CD4-positive, alpha-beta T cell (primary cell): ENCODE measurements at regions of chr10 and their contacts with region 1.

Region 1: DNA sequence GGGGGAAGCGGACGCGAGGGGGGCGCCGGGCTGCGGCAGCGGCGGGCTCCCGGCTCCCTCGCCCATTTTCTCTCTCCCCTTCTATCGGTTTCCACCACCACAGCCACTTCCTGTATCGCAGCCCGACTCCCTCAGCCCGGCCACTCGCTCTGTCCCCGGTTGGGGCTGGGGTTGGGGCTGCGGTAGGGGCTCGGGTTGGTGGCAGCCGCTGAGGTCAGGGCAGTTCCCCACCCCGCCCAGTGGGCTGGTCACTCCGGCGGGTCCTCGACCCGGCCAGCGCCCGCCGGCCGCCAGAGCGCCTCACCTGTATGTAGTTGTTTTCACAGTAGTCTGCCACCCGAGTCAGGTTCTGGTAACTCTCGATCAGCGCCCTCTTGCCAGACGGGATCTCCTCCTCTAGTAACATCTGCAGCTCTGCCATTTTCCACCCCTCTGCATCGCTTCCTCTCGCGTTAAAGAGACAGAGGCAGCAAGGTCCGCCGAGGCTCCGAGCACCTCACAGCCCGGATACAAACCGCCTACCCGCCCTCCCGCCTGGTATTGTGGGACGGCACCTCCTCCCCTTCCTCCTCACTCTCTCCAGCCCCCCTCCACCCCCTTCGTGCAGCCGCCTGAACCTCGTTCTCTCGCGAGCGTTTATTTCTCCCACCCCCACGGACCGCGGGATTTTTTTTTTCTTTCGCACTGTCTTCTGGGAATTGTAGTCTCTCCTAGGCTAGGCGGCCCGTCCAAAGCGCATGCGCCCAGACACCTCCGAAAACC is at the start of gene ABI1:
- DNase-seq: peak; percentile 96 to 99 (median 98)
- ATAC-seq: peak; percentile 90
- H3K4me3 ChIP-seq: peak within 1 kb of the TSS; percentile 91
- H3K4me3 Mint-ChIP-seq: peak within 1 kb of the TSS; percentile 95
- H3K27ac ChIP-seq: peak within 1 kb of the TSS; percentile 88 to 97
- H3K27ac Mint-ChIP-seq: peak within 1 kb of the TSS; percentile 87
- H3K4me1 ChIP-seq: peaks cover 22% of the 10 kb centered on the region
- H3K4me1 Mint-ChIP-seq: peaks cover 33% of the 10 kb centered on the region
- H3K27me3 ChIP-seq: no peaks in the 10 kb centered on the region
- H3K27me3 Mint-ChIP-seq: peaks cover 7% of the 10 kb centered on the region
- CTCF ChIP-seq: no peak
- total RNA-seq, gene ABI1: 83.2 to 83.6 TPM

Region 2: DNA sequence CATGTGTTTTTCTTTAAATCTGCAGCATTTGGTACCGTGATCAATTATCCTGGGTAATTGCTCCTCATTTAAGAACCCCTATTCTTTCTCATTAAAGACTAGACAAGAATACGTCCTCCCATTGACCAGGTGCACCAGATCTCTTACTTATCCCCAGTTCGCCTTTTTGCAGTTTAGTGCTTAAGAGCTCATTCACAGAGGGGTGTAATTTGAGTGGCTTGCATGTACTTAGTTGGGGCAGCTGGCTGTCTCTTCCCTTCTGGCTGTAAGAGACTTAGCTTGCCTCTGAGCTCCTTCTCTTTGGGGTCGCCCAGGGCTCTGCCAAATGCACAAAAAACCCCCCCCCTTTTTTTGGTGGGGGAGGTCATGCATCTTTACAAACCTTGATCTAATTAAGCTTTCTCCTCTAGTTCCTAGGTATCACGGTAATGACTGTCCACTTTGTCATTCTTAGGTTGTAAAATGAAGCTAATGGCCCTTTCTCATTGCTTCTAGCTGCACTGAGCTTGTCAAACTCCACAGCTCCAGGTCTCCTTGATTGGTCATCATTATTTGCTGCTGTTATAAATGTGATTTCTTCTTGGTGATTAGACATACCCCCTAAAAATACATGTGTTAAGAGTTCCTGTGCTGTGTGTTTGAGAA is 617.8 kb before region 1 on chr10:
- CTCF ChIA-PET with region 1: no interaction called
- POLR2A ChIA-PET with region 1: no interaction called
- intact Hi-C with region 1: no loop called
- DNase-seq: no peak
- ATAC-seq: no peak
- H3K4me3 ChIP-seq: no peak overlapping the region
- H3K4me3 Mint-ChIP-seq: no peak overlapping the region
- H3K27ac ChIP-seq: no peak overlapping the region
- H3K27ac Mint-ChIP-seq: no peak overlapping the region
- H3K4me1 ChIP-seq: no peaks in the 10 kb centered on the region
- H3K4me1 Mint-ChIP-seq: no peaks in the 10 kb centered on the region
- H3K27me3 ChIP-seq: peaks cover 0 to 3% of the 10 kb centered on the region in 2 experiments
- H3K27me3 Mint-ChIP-seq: peaks cover 53% of the 10 kb centered on the region
- CTCF ChIP-seq: no peak

Region 3: DNA sequence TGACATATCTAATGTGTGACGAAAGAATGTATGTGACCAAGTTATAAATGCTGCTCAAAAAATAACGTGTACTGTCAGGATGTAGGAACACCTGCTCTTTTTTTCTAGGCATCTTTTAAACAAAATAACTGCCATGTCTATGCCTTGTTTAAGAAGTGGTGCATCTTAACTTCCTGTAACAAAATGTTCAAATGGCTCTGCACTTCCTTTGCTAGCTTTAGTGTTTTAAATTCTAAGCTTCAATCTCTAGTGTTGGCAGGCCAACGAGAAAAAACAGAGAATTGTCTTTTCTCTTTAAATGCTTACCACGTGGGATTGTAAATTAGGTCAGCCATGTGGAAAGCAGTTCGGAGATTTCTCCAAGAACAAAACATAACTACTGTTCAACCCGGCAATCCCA is 177.7 kb before region 1 on chr10:
- CTCF ChIA-PET with region 1: no interaction called
- POLR2A ChIA-PET with region 1: interaction called, 3 read pairs
- intact Hi-C with region 1: loop called (anchors 2 to 5 kb)
- DNase-seq: peak in 3 of 14 experiments; percentile 62 to 68 (median 63)
- ATAC-seq: peak; percentile 91
- H3K4me3 ChIP-seq: no peak overlapping the region
- H3K4me3 Mint-ChIP-seq: peak overlapping the region; percentile 11
- H3K27ac ChIP-seq: peak overlapping the region; percentile 28 to 50
- H3K27ac Mint-ChIP-seq: peak overlapping the region; percentile 83
- H3K4me1 ChIP-seq: no peaks in the 10 kb centered on the region
- H3K4me1 Mint-ChIP-seq: peaks cover 50% of the 10 kb centered on the region
- H3K27me3 ChIP-seq: no peaks in the 10 kb centered on the region
- H3K27me3 Mint-ChIP-seq: peaks cover 4% of the 10 kb centered on the region
- CTCF ChIP-seq: no peak

Region 4: GRCh38 chr10:26743091-26743490 is 117.5 kb before region 1 on chr10:
- CTCF ChIA-PET with region 1: interaction called, 4 read pairs
- POLR2A ChIA-PET with region 1: no interaction called
- intact Hi-C with region 1: loop called in 1 of 2 experiments (anchors 5 kb)
- DNase-seq: no peak
- ATAC-seq: no peak
- H3K4me3 ChIP-seq: no peak overlapping the region
- H3K4me3 Mint-ChIP-seq: no peak overlapping the region
- H3K27ac ChIP-seq: no peak overlapping the region
- H3K27ac Mint-ChIP-seq: peak overlapping the region; percentile 62
- H3K4me1 ChIP-seq: peaks cover 3% of the 10 kb centered on the region
- H3K4me1 Mint-ChIP-seq: peaks cover 36% of the 10 kb centered on the region
- H3K27me3 ChIP-seq: no peaks in the 10 kb centered on the region
- H3K27me3 Mint-ChIP-seq: no peaks in the 10 kb centered on the region
- CTCF ChIP-seq: no peak

Region 5: GRCh38 chr10:26821699-26822570 is 38.7 kb before region 1 on chr10:
- CTCF ChIA-PET with region 1: no interaction called
- POLR2A ChIA-PET with region 1: no interaction called
- intact Hi-C with region 1: loop called in 1 of 2 experiments (anchors 5 kb)
- DNase-seq: no peak
- ATAC-seq: no peak
- H3K4me3 ChIP-seq: no peak overlapping the region
- H3K4me3 Mint-ChIP-seq: no peak overlapping the region
- H3K27ac ChIP-seq: no peak overlapping the region
- H3K27ac Mint-ChIP-seq: peak overlapping the region; percentile 0
- H3K4me1 ChIP-seq: peaks cover 18% of the 10 kb centered on the region
- H3K4me1 Mint-ChIP-seq: peaks cover 73% of the 10 kb centered on the region
- H3K27me3 ChIP-seq: no peaks in the 10 kb centered on the region
- H3K27me3 Mint-ChIP-seq: no peaks in the 10 kb centered on the region
- CTCF ChIP-seq: no peak

Region 6: DNA sequence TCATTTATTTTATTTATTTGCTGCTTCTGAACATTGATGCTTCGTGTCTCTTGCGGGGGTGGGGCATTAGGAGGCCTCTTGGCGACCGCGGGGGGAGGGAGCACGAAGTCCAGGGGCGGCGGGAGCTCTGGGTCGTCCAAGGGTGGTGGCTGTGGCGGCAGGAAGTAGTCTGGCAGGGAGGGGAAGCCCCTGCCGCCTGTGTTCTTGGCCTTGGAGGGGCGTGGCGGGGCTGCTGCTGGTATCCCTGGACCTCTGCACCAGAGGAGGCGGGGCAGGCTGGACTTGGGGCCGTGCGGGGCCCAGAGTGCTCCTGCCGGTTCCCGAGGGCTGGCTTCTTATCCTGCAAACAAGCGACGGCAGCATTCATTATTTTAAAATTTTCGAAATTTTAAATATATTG is 70.6 kb after region 1 on chr10:
- CTCF ChIA-PET with region 1: no interaction called
- POLR2A ChIA-PET with region 1: no interaction called
- intact Hi-C with region 1: no loop called
- DNase-seq: peak in 2 of 14 experiments; percentile 3 to 4
- ATAC-seq: no peak
- H3K4me3 ChIP-seq: no peak overlapping the region
- H3K4me3 Mint-ChIP-seq: no peak overlapping the region
- H3K27ac ChIP-seq: no peak overlapping the region
- H3K27ac Mint-ChIP-seq: no peak overlapping the region
- H3K4me1 ChIP-seq: peaks cover 6% of the 10 kb centered on the region
- H3K4me1 Mint-ChIP-seq: no peaks in the 10 kb centered on the region
- H3K27me3 ChIP-seq: no peaks in the 10 kb centered on the region
- H3K27me3 Mint-ChIP-seq: peaks cover 4% of the 10 kb centered on the region
- CTCF ChIP-seq: no peak

Region 7: GRCh38 chr10:27099916-27100812 is 239.5 kb after region 1 on chr10 and contains the start of gene ANKRD26:
- CTCF ChIA-PET with region 1: no interaction called
- POLR2A ChIA-PET with region 1: no interaction called
- intact Hi-C with region 1: loop called (anchors 1 to 5 kb)
- DNase-seq: peak; percentile 90 to 99 (median 95)
- ATAC-seq: peak; percentile 53
- H3K4me3 ChIP-seq: peak within 1 kb of the TSS; percentile 71
- H3K4me3 Mint-ChIP-seq: peak within 1 kb of the TSS; percentile 95
- H3K27ac ChIP-seq: peak within 1 kb of the TSS; percentile 82 to 85
- H3K27ac Mint-ChIP-seq: peak within 1 kb of the TSS; percentile 92
- H3K4me1 ChIP-seq: peaks cover 29% of the 10 kb centered on the region
- H3K4me1 Mint-ChIP-seq: peaks cover 51% of the 10 kb centered on the region
- H3K27me3 ChIP-seq: no peaks in the 10 kb centered on the region
- H3K27me3 Mint-ChIP-seq: no peaks in the 10 kb centered on the region
- CTCF ChIP-seq: no peak
- total RNA-seq, gene ANKRD26: 6.2 to 6.6 TPM

Region 8: GRCh38 chr10:27355918-27356573 is 495.4 kb after region 1 on chr10:
- CTCF ChIA-PET with region 1: no interaction called
- POLR2A ChIA-PET with region 1: no interaction called
- intact Hi-C with region 1: no loop called
- DNase-seq: no peak
- ATAC-seq: no peak
- H3K4me3 ChIP-seq: no peak overlapping the region
- H3K4me3 Mint-ChIP-seq: no peak overlapping the region
- H3K27ac ChIP-seq: no peak overlapping the region
- H3K27ac Mint-ChIP-seq: no peak overlapping the region
- H3K4me1 ChIP-seq: no peaks in the 10 kb centered on the region
- H3K4me1 Mint-ChIP-seq: peaks cover 5% of the 10 kb centered on the region
- H3K27me3 ChIP-seq: no peaks in the 10 kb centered on the region
- H3K27me3 Mint-ChIP-seq: peaks cover 8% of the 10 kb centered on the region
- CTCF ChIP-seq: no peak